Naive thymus-derived CD4-positive, alpha-beta T cell (primary cell): ENCODE measurements at regions of chr1 and their contacts with region 1.

Region 1: DNA sequence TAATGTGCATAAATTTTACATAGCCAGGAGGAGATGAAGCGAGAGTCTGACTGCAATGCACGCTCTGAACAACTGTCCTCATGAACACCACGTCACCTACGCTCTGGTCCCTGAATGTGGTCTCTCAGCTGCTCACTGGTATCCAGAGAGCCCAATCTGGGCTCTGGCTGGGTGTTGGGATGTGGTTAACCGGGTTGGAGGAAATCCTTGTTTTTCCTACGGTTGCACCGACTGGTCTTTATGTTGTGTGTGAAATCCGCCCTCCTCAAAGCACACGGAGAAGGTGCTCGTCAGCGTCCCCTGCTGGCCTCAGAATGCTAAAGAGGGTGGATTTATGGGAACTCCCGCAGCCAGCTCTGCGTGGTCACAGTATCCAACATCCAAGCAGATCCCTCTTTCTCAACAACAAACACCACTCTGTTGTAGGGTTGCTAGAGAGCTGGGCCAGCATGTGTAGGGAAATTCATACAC is 51.8 kb upstream of the FAM89A start:
- DNase-seq: peak in 6 of 9 donors; percentile 20 to 35 (median 24)
- ATAC-seq: peak; percentile 50
- H3K4me3 ChIP-seq: no peak overlapping the region
- H3K4me3 Mint-ChIP-seq: no peak overlapping the region
- H3K27ac ChIP-seq: no peak overlapping the region
- H3K27ac Mint-ChIP-seq: no peak overlapping the region
- H3K4me1 ChIP-seq: no peaks in the 10 kb centered on the region
- H3K4me1 Mint-ChIP-seq: peaks cover 0 to 2% (median 0%) of the 10 kb centered on the region in 7 donors
- H3K27me3 ChIP-seq: no peaks in the 10 kb centered on the region
- H3K27me3 Mint-ChIP-seq: peaks cover 22 to 33% (median 29%) of the 10 kb centered on the region in 5 donors

Region 2: DNA sequence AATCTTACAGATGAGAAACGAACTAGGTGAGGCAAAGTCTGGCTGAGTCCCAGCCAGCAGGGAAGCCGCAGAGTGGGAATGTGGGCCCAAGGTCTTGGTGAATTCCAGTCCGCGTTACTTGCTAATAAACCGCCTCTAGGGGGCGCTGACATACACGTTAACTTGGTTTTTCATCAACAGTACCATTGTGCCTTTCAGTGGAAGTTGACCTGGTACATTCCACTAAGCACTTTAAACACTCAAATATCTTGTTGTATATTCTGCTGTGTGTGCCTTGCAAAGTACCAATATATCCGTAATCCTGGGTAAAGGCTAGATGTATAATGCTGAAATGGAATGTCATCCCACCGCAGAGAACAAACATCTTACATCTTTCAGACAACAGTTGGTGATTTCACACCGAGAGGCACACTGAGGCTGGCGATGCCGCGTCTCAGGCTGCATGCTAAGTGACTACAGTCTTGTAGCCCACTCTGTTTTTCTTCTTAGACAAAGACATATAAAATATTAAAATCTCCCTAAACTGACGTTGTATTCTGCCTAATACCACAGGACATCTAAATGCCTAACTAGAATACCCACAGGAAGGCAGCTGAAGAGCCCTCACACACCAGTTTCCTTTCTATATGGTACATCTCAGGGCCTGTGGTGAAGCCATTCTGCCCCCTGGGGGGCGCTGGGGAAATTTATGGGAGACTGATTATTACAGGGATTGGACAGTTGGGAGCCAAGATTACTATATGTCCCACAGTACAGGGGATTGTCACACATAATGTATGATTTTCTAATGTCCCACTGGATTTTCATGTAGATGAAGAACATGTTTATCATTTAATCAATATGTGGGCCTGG is 174.4 kb before region 1 on chr1:
- CTCF ChIA-PET with region 1: interaction called, 4 read pairs
- POLR2A ChIA-PET with region 1: no interaction called
- intact Hi-C with region 1: loop called (anchors 1 kb)
- DNase-seq: peak; percentile 33 to 74 (median 67)
- ATAC-seq: peak; percentile 81
- H3K4me3 ChIP-seq: no peak overlapping the region
- H3K4me3 Mint-ChIP-seq: no peak overlapping the region
- H3K27ac ChIP-seq: no peak overlapping the region
- H3K27ac Mint-ChIP-seq: peak overlapping the region in 5 of 9 donors; percentile 17 to 32 (median 24)
- H3K4me1 ChIP-seq: no peaks in the 10 kb centered on the region
- H3K4me1 Mint-ChIP-seq: peaks cover 0 to 11% (median 0%) of the 10 kb centered on the region in 7 donors
- H3K27me3 ChIP-seq: no peaks in the 10 kb centered on the region
- H3K27me3 Mint-ChIP-seq: no peaks in the 10 kb centered on the region